Left cardiac atrium (tissue), 4 donors: ENCODE measurements at regions of chr2 and their contacts with region 1.

Region 1: DNA sequence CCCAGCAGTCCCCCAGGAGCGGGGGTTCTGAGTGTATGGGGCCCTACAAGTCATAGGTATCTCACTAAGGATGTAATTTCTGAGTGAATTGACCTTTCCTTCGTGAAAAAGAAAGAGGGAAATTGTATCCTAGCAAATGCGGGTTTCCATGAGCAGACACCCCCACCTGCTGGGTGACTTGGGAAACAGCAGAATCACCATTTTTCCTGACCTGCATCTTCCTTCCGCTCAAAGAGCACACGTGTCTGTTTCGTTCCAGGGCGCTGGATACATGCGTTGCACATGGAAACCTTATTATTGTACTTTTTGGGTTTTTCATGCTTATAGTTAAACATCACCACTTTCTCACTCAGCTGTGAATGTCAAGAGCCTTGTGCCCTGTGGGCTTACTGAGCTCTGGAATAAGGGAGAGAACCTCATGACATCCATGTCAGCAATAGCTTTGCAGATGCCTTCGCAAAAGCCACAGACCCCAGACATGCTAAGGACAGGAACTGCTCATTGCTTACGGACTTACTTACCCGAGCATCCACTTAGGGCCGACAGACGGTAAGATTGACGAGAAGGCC is 132.8 kb downstream of the TPO start:
- DNase-seq: no peak
- ATAC-seq: no peak

Region 2: DNA sequence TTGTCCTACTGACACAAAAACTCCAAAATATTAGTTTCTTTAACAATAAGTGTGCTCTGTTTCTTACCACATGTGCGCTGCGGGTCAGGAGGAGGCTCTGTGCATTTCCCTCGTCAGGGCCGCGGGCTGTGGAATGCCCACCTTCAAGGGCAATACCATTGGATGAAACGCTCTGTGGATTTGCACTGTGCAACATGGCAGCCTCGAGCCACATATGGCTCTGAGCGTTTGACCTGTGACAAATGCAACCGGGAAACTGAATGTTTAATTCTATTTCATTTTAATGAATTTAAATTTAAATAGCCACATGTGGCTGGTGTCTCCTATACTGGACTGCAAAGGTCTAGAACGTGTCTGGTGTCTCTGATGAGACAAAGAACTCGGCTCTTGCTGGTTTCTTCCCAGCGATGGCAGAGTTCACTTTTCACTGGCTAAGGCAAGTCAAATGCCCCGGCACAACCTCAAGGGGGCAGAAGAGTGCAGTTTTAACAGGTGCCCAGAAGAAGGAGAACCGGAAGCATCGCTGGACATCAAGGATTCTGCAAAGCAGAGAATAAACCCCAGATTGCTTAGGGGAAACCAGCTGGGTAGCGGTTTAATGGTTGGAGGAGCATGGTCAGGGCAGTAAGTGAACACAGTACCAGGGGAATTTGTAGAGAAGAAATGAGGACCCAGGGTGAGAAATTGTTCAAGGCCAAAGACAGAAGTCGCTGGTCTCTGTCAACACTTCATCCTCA is 831.9 kb before region 1 on chr2:
- intact Hi-C with region 1: loop called in 1 of 2 experiments (anchors 2 kb)
- DNase-seq: peak; percentile 36
- ATAC-seq: peak in 1 of 2 donors; percentile 70

Region 3: GRCh38 chr2:719734-720133 is 826.4 kb before region 1 on chr2:
- intact Hi-C with region 1: loop called (anchors 2 to 5 kb)
- DNase-seq: no peak
- ATAC-seq: no peak

Region 4: DNA sequence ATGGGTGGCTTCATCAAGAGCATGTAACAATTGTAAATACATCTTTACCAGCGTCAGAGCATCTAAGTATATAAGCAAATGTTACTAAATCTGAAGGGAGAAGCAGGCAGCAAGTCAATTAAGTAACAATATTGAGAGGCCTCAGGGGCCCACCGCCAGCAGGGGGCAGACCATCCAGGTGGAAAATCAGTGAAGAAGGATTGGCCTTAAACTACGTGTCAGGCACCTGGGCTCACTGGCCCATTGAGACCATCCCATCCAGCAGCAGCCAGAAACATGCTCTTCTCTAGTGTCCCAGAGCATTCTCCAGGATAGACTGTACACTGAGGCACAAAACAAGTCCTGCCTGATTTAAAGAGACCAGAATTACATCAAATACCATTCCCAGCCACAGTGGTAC is 691.6 kb before region 1 on chr2:
- intact Hi-C with region 1: loop called (anchors 5 to 10 kb)
- DNase-seq: peak; percentile 44
- ATAC-seq: no peak

Region 5: DNA sequence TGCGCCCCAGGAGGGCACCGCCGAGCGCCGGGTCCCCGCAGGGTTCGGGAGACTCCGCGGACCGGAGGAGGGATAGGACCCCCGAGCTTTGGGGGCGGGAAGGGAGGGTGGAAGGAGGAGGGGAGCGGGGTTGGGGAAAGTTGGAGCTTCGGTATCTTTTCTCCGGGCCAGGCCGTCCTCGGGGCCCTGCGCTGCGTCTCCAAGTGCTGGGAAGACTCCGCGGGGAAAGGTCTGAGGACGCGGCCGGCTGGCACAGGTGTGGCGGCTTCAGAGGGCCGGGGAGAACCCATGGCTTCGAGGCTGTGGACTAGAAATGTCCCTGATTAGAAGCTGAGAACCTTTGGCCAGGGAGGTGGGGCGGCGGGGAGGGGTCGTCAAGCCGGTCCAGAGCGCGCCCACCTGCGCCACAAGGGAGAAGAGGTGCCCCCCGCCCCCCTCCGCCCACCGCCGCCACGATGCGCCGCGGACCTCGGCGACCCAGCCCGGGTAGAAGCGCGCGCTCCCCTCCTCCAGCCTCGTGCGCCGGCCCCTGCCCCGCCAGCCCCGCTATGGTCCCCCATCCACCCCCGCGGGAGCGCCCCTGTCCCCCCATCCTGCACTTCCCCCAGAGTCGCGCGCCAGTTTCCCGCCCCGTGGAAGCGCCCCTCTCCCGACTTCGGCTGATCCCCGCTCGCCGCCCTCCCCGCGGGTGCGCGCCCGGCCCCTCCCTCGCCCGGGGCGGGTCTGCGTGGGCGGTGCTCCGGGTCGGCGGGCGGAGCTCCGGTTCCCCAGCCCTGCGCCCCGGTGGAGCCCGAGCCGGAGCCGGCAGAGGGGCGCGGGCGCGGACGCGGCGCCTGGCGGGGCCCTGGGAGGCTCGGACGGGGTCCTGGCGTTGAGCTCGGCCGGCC is 595.8 kb before region 1 on chr2 and contains the start of gene SNTG2:
- intact Hi-C with region 1: loop called (anchors 5 kb)
- DNase-seq: peak; percentile 45
- ATAC-seq: peak; percentile 90 to 93
- total RNA-seq, gene SNTG2: 1.6 to 2.9 TPM

Region 6: GRCh38 chr2:1625208-1625937 is 79.3 kb after region 1 on chr2:
- intact Hi-C with region 1: no loop called
- DNase-seq: no peak
- ATAC-seq: peak; percentile 23 to 84